ENCODE measurements at regions of chr20 and their contacts with region 1.

Region 1: GRCh38 chr20:50980851-50981713 is 22.5 kb downstream of the MOCS3 start:
- DNase-seq: peak; percentile 80
- ATAC-seq: peak; percentile 71
- H3K4me3 Mint-ChIP-seq: no peak overlapping the region
- H3K27ac Mint-ChIP-seq: no peak overlapping the region
- H3K4me1 Mint-ChIP-seq: peaks cover 4% of the 10 kb centered on the region
- H3K27me3 Mint-ChIP-seq: peaks cover 13% of the 10 kb centered on the region

Region 2: DNA sequence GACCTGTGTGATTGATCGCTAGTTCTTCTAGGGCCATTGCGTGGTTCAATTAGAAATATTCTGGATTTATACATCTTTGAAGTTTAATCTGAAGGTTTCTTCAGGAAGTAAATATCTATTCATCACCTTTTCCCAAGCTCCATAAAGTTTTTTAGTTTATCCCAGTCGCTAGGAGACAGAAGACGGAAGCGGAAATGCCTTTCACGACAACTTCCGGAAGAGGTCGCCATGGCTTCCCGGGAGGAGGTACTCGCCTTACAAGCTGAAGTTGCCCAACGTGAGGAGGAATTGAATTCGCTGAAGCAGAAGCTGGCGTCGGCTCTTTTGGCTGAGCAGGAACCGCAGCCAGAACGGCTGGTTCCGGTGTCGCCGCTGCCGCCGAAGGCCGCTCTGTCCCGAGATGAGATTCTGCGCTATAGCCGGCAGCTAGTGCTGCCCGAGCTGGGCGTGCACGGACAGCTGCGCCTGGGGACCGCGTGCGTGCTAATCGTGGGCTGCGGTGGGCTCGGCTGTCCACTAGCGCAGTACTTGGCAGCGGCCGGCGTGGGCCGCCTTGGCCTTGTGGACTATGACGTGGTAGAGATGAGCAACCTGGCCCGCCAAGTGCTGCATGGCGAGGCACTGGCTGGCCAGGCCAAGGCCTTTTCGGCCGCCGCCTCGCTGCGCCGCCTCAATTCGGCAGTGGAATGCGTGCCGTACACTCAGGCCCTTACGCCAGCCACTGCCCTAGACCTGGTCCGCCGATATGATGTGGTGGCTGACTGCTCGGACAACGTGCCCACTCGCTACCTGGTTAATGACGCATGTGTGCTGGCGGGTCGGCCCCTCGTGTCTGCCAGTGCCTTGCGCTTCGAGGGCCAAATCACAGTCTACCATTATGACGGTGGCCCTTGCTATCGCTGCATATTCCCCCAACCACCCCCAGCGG is 22.2 kb before region 1 on chr20 and contains the start of gene MOCS3:
- CTCF ChIA-PET with region 1: interaction called, 11 read pairs
- POLR2A ChIA-PET with region 1: no interaction called
- DNase-seq: peak; percentile 91
- ATAC-seq: peak; percentile 75
- H3K4me3 Mint-ChIP-seq: peak within 1 kb of the TSS; percentile 93
- H3K27ac Mint-ChIP-seq: peak within 1 kb of the TSS; percentile 99
- H3K4me1 Mint-ChIP-seq: peaks cover 44% of the 10 kb centered on the region
- H3K27me3 Mint-ChIP-seq: no peaks in the 10 kb centered on the region
- total RNA-seq, gene MOCS3: 4.8 to 5.7 TPM

Region 3: GRCh38 chr20:50969435-50969834 is 11.6 kb before region 1 on chr20:
- CTCF ChIA-PET with region 1: interaction called, 29 read pairs
- POLR2A ChIA-PET with region 1: no interaction called
- DNase-seq: no peak
- ATAC-seq: no peak
- H3K4me3 Mint-ChIP-seq: no peak overlapping the region
- H3K27ac Mint-ChIP-seq: no peak overlapping the region
- H3K4me1 Mint-ChIP-seq: no peaks in the 10 kb centered on the region
- H3K27me3 Mint-ChIP-seq: peaks cover 4% of the 10 kb centered on the region

Region 4: DNA sequence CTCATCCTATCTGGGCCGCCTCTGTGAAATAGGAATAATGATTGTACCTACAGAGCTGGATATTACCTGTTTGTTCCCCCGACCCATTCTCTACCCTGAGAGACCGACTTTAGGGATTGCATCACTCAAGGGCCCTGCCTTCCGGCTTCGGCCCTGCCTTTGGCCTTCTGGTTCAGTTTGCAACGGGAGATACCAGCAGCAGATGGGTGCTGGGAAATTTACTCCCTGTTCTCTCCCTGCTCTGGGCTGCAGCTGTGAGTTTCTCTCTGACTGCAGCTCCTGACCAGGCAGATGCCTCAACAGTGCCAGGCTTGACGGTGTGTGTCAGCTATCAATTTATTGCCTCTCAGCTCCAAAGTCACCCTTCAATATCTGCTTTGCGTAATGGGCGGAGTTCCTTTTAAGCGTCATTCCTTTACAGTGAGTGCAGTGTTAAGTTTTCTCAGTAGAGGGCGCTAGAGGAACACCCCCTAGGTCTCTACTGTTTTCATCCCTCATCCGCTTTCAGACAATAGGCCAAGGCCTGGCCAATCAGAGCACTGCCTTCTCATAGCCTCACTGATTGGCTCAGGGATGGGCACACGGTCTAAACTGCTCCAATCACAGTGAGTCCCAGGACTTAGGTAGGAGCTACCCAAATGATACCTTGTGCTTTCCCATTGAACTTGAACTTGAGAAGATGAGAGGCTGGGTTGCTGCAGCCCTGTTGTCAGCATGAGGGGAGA is 11.8 kb after region 1 on chr20:
- CTCF ChIA-PET with region 1: interaction called, 37 read pairs
- POLR2A ChIA-PET with region 1: no interaction called
- DNase-seq: peak; percentile 64
- ATAC-seq: peak; percentile 98
- H3K4me3 Mint-ChIP-seq: no peak overlapping the region
- H3K27ac Mint-ChIP-seq: no peak overlapping the region
- H3K4me1 Mint-ChIP-seq: no peaks in the 10 kb centered on the region
- H3K27me3 Mint-ChIP-seq: peaks cover 5% of the 10 kb centered on the region

Region 5: DNA sequence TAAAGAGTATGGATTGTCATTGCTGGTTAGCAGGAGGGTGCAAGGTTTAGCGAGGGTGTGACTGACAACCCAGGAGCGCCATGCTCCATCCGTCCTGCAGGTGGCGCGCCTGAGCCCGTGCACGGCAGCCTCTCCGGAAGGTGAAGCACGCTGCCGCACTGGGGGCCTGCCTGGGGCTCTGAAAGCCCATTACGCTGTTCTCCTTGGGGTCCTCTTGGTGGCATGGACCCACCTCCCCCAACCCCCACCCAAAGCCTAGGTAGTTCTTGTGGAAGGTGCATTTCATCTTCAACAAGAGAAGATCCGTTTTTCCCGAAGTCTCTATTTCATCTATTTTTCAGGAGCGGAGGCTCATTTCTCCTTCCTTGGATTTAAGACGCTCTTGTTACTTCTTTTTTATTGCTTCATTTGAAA is 239.2 kb after region 1 on chr20:
- CTCF ChIA-PET with region 1: no interaction called
- POLR2A ChIA-PET with region 1: no interaction called
- DNase-seq: peak; percentile 62
- ATAC-seq: peak; percentile 57
- H3K4me3 Mint-ChIP-seq: no peak overlapping the region
- H3K27ac Mint-ChIP-seq: no peak overlapping the region
- H3K4me1 Mint-ChIP-seq: peaks cover 6% of the 10 kb centered on the region
- H3K27me3 Mint-ChIP-seq: peaks cover 39% of the 10 kb centered on the region

Region 6: GRCh38 chr20:51306503-51307358 is 325.6 kb after region 1 on chr20:
- CTCF ChIA-PET with region 1: interaction called, 87 read pairs
- POLR2A ChIA-PET with region 1: no interaction called
- DNase-seq: peak; percentile 77
- ATAC-seq: peak; percentile 99
- H3K4me3 Mint-ChIP-seq: no peak overlapping the region
- H3K27ac Mint-ChIP-seq: no peak overlapping the region
- H3K4me1 Mint-ChIP-seq: peaks cover 3% of the 10 kb centered on the region
- H3K27me3 Mint-ChIP-seq: peaks cover 16% of the 10 kb centered on the region

Measured in activated CD8-positive, alpha-beta T cell treated with anti-CD3 and anti-CD28 coated beads, Interleukin-2, amount 10 ng/mL, durations not matched to agents 7 days and 5 days (primary cell).